ENCODE measurements at regions of chr5 and their contacts with region 1.

Region 1: GRCh38 chr5:112210430-112211005 is 208.6 kb downstream of the EPB41L4A start:
- DNase-seq: no peak
- ATAC-seq: peak; percentile 25
- H3K4me3 Mint-ChIP-seq: no peak overlapping the region
- H3K27ac Mint-ChIP-seq: no peak overlapping the region
- H3K4me1 Mint-ChIP-seq: peaks cover 4% of the 10 kb centered on the region
- H3K27me3 Mint-ChIP-seq: peaks cover 13% of the 10 kb centered on the region
- CTCF ChIP-seq: no peak

Region 2: GRCh38 chr5:112757468-112758208 is 547.1 kb after region 1 on chr5:
- CTCF ChIA-PET with region 1: no interaction called
- POLR2A ChIA-PET with region 1: no interaction called
- intact Hi-C with region 1: loop called (anchors 1 kb)
- DNase-seq: no peak
- ATAC-seq: peak; percentile 81
- H3K4me3 Mint-ChIP-seq: no peak overlapping the region
- H3K27ac Mint-ChIP-seq: peak overlapping the region; percentile 46
- H3K4me1 Mint-ChIP-seq: peaks cover 12% of the 10 kb centered on the region
- H3K27me3 Mint-ChIP-seq: no peaks in the 10 kb centered on the region
- CTCF ChIP-seq: peak; percentile 82